Mammary epithelial cell (primary cell): ENCODE measurements at regions of chr10 and their contacts with region 1.

Region 1: GRCh38 chr10:4656576-4657182 is 169.3 kb upstream of the AKR1E2 start:
- DNase-seq: peak; percentile 52
- H3K4me3 ChIP-seq: no peak overlapping the region
- H3K27ac ChIP-seq: peak overlapping the region; percentile 37
- H3K4me1 ChIP-seq: peaks cover 10% of the 10 kb centered on the region
- H3K27me3 ChIP-seq: no peaks in the 10 kb centered on the region
- CTCF ChIP-seq: peak; percentile 89 to 91

Region 2: GRCh38 chr10:3570855-3571266 is 1085.8 kb before region 1 on chr10:
- CTCF ChIA-PET with region 1: no interaction called
- dilution Hi-C with region 1: no loop called
- in situ Hi-C with region 1: no loop called
- intact Hi-C with region 1: no loop called
- DNase-seq: no peak
- H3K4me3 ChIP-seq: no peak overlapping the region
- H3K27ac ChIP-seq: no peak overlapping the region
- H3K4me1 ChIP-seq: no peaks in the 10 kb centered on the region
- H3K27me3 ChIP-seq: no peaks in the 10 kb centered on the region
- CTCF ChIP-seq: no peak

Region 3: DNA sequence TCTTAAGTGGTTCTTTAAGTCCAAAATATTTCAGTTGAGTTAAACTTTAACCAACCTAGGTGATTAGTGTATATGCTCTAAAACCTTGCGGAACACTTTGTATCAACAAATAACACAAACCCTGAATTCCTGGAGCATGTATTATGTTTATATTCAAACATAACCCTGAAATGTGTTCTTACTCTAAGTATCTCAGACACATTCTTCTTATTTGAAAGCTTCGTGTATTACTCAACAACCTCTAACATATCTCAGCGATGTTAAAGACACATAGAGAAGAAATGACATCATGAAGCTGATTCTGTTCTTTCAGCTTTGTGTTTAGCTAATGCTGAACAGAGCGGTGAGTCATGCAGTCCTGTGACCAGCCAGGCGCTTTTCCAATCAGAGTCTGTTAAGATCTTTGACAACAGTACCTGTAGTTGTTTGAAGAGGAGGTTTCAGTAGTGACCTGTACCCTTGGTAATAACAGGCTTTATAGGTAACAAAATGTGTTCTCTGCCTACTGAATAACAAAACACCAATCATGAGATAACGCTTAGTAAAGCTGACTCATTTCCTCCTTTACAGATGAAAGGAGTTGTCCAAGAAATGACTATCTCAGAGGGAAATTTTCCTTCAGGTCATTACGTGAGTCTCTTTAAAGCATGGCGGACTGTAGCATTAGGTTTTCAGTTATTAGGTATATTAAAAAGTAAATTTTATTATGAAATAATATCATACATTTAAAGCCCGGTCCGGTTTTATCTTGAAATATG is 804.4 kb before region 1 on chr10:
- CTCF ChIA-PET with region 1: interaction called, 7 read pairs
- dilution Hi-C with region 1: no loop called
- in situ Hi-C with region 1: no loop called
- intact Hi-C with region 1: loop called (anchors 5 kb)
- DNase-seq: peak; percentile 100
- H3K4me3 ChIP-seq: no peak overlapping the region
- H3K27ac ChIP-seq: peak overlapping the region; percentile 99
- H3K4me1 ChIP-seq: peaks cover 39% of the 10 kb centered on the region
- H3K27me3 ChIP-seq: no peaks in the 10 kb centered on the region
- CTCF ChIP-seq: no peak

Region 4: GRCh38 chr10:4344511-4344994 is 312.1 kb before region 1 on chr10:
- CTCF ChIA-PET with region 1: no interaction called
- dilution Hi-C with region 1: no loop called
- in situ Hi-C with region 1: loop called in 1 of 2 experiments (anchors 5 kb)
- intact Hi-C with region 1: loop called (anchors 1 kb)
- DNase-seq: peak; percentile 99
- H3K4me3 ChIP-seq: no peak overlapping the region
- H3K27ac ChIP-seq: peak overlapping the region; percentile 90
- H3K4me1 ChIP-seq: peaks cover 16% of the 10 kb centered on the region
- H3K27me3 ChIP-seq: no peaks in the 10 kb centered on the region
- CTCF ChIP-seq: no peak

Region 5: GRCh38 chr10:4522296-4523000 is 134.2 kb before region 1 on chr10:
- CTCF ChIA-PET with region 1: no interaction called
- dilution Hi-C with region 1: no loop called
- in situ Hi-C with region 1: loop called in 1 of 2 experiments (anchors 10 kb)
- intact Hi-C with region 1: no loop called
- DNase-seq: no peak
- H3K4me3 ChIP-seq: no peak overlapping the region
- H3K27ac ChIP-seq: no peak overlapping the region
- H3K4me1 ChIP-seq: peaks cover 6% of the 10 kb centered on the region
- H3K27me3 ChIP-seq: no peaks in the 10 kb centered on the region
- CTCF ChIP-seq: no peak

Region 6: GRCh38 chr10:4617589-4617988 is 39.1 kb before region 1 on chr10:
- CTCF ChIA-PET with region 1: no interaction called
- dilution Hi-C with region 1: loop called (anchors 5 kb)
- in situ Hi-C with region 1: no loop called
- intact Hi-C with region 1: no loop called
- DNase-seq: no peak
- H3K4me3 ChIP-seq: no peak overlapping the region
- H3K27ac ChIP-seq: no peak overlapping the region
- H3K4me1 ChIP-seq: no peaks in the 10 kb centered on the region
- H3K27me3 ChIP-seq: no peaks in the 10 kb centered on the region
- CTCF ChIP-seq: no peak